ENCODE measurements at regions of chr20 and their contacts with region 1.

Region 1: GRCh38 chr20:58224974-58225373 is 3.5 kb downstream of the ANKRD60 start:
- DNase-seq: no peak
- ATAC-seq: no peak
- H3K4me3 ChIP-seq: no peak overlapping the region
- H3K27ac ChIP-seq: no peak overlapping the region
- H3K4me1 ChIP-seq: no peaks in the 10 kb centered on the region
- H3K27me3 ChIP-seq: peaks cover 3% of the 10 kb centered on the region; the same call in 1 of the 2 replicates
- CTCF ChIP-seq: no peak

Region 2: DNA sequence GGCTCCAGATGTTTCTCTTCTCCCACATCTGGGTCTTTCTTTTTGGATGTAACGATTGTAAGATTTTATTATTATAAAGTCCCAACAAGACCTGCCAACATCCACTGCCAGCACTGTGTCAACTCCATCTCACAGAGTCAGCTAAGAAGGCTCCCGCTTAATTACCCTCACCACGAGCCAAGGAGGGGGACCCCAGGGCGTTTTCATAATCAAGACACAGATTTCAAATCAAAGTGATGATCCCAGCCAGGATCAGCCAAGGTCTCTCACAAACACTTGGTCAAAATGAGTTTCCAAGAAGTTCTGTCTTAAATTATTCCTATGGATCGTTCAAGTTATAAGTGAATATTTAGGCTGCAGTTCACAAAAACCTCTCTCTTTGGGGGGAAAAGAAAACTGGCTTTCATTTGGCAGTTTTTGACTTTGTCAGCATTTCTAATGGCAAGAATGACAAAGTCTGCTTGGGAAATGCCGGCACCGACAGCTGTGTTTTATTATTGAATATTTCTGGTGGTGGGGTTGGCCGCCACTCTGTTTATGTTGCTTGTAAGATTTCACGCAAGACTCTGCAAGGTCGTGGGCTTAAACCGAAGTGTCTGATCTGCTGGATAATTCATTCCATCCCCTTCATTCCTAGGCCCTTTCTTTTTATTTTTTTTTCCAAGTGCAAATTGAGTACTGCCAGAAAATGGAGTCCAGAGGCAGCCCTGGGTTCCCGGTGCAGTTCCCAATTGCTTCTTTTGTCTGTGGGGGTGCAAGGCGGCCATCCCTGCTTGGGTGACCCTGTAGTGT is 345.0 kb before region 1 on chr20:
- CTCF ChIA-PET with region 1: no interaction called
- POLR2A ChIA-PET with region 1: no interaction called
- in situ Hi-C with region 1: no loop called
- intact Hi-C with region 1: no loop called
- DNase-seq: no peak
- ATAC-seq: no peak
- H3K4me3 ChIP-seq: no peak overlapping the region
- H3K27ac ChIP-seq: no peak overlapping the region
- H3K4me1 ChIP-seq: no peaks in the 10 kb centered on the region
- H3K27me3 ChIP-seq: no peaks in the 10 kb centered on the region
- CTCF ChIP-seq: no peak

Region 3: DNA sequence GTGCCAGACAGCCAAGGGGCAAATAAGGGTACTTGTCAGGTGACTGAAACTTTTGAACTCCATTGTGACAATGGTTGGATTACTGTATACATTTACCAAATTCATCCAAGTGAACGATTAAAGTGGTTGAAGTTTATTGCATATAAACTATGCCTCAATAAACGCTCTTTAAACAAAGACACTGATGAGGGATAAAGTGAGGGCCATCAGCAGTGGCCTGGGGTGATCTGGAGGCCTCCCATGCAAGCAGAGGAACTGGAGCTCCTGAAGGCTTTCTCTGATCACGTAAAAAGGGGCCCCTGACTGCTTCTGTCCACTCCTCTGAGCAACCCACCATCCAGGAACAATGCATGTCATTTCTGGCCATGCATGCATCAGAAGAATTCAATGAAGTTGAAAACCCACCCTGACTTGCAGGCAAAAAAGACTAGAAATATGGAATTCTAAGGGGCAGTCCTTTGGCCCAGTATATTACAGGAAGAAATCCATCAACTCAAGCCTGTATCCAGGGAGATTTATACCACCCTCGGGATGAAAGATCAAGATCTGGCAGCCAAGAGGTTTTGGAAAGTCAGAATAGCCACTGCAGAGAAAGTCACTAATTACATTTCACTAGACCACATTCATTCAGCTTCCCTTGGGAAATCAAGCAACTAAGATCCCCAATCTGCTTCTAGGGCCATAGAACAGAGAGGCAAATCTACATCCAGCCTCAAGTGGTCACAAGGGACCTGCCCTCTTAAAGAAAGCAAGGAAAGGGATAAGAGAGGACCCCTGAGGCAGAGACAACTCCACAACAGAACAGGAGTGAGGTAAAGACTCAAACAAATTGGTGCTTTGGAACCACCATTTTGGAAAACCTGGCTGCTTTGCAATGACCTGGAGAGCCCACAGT is 52.9 kb after region 1 on chr20:
- CTCF ChIA-PET with region 1: interaction called, 14 read pairs
- POLR2A ChIA-PET with region 1: no interaction called
- in situ Hi-C with region 1: no loop called
- intact Hi-C with region 1: no loop called
- DNase-seq: no peak
- ATAC-seq: no peak
- H3K4me3 ChIP-seq: no peak overlapping the region
- H3K27ac ChIP-seq: no peak overlapping the region
- H3K4me1 ChIP-seq: no peaks in the 10 kb centered on the region
- H3K27me3 ChIP-seq: no peaks in the 10 kb centered on the region
- CTCF ChIP-seq: no peak

Measured in Panc1 (cell line).